CD8-positive, alpha-beta memory T cell (primary cell): ENCODE measurements at regions of chr16 and their contacts with region 1.

Region 1: GRCh38 chr16:29700253-29700987 is 21.4 kb downstream of the QPRT start:
- DNase-seq: peak; percentile 67 to 84 (median 72)
- H3K4me3 ChIP-seq: no peak overlapping the region
- H3K4me3 Mint-ChIP-seq: peak overlapping the region; percentile 75 to 92 (median 80)
- H3K27ac ChIP-seq: peak overlapping the region; percentile 41
- H3K27ac Mint-ChIP-seq: peak overlapping the region; percentile 91 to 99 (median 96)
- H3K4me1 ChIP-seq: peaks cover 34% of the 10 kb centered on the region
- H3K4me1 Mint-ChIP-seq: peaks cover 33 to 42% (median 40%) of the 10 kb centered on the region in 3 donors
- H3K27me3 ChIP-seq: no peaks in the 10 kb centered on the region
- H3K27me3 Mint-ChIP-seq: no peaks in the 10 kb centered on the region

Region 2: GRCh38 chr16:29720699-29721098 is 20.3 kb after region 1 on chr16:
- CTCF ChIA-PET with region 1: interaction called, 30 read pairs
- POLR2A ChIA-PET with region 1: interaction called, 4 read pairs
- DNase-seq: no peak
- H3K4me3 ChIP-seq: no peak overlapping the region
- H3K4me3 Mint-ChIP-seq: peak overlapping the region in 2 of 7 donors; percentile 8 to 13
- H3K27ac ChIP-seq: no peak overlapping the region
- H3K27ac Mint-ChIP-seq: no peak overlapping the region
- H3K4me1 ChIP-seq: no peaks in the 10 kb centered on the region
- H3K4me1 Mint-ChIP-seq: peaks cover 8 to 14% (median 13%) of the 10 kb centered on the region in 3 donors
- H3K27me3 ChIP-seq: no peaks in the 10 kb centered on the region
- H3K27me3 Mint-ChIP-seq: peaks cover 0 to 1% of the 10 kb centered on the region in 2 donors

Region 3: DNA sequence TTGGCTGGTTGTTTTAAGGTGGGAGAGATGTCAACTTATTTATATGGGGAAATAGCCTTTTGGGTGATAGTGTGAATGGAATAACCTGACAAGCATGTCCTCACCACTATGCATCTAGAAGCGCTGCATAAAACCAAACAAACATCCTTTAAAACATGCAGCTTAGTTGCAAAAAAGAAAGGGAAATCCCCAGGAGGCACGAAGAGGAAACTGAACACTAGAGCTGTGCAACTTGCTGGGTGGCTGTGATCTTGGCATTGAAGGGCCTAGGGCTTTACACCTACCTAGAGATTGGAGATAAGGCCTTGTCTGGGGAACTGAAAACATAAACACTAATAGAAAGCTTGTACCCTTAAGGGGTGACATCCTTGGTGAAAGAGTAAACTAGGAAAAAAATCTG is 38.1 kb after region 1 on chr16:
- CTCF ChIA-PET with region 1: interaction called, 28 read pairs
- POLR2A ChIA-PET with region 1: interaction called, 7 read pairs
- DNase-seq: peak; percentile 35 to 80 (median 79)
- H3K4me3 ChIP-seq: no peak overlapping the region
- H3K4me3 Mint-ChIP-seq: peak overlapping the region; percentile 24 to 78 (median 67)
- H3K27ac ChIP-seq: peak overlapping the region; percentile 21
- H3K27ac Mint-ChIP-seq: peak overlapping the region; percentile 89 to 98 (median 96)
- H3K4me1 ChIP-seq: peaks cover 78% of the 10 kb centered on the region
- H3K4me1 Mint-ChIP-seq: peaks cover 78 to 85% (median 82%) of the 10 kb centered on the region in 3 donors
- H3K27me3 ChIP-seq: no peaks in the 10 kb centered on the region
- H3K27me3 Mint-ChIP-seq: no peaks in the 10 kb centered on the region

Region 4: DNA sequence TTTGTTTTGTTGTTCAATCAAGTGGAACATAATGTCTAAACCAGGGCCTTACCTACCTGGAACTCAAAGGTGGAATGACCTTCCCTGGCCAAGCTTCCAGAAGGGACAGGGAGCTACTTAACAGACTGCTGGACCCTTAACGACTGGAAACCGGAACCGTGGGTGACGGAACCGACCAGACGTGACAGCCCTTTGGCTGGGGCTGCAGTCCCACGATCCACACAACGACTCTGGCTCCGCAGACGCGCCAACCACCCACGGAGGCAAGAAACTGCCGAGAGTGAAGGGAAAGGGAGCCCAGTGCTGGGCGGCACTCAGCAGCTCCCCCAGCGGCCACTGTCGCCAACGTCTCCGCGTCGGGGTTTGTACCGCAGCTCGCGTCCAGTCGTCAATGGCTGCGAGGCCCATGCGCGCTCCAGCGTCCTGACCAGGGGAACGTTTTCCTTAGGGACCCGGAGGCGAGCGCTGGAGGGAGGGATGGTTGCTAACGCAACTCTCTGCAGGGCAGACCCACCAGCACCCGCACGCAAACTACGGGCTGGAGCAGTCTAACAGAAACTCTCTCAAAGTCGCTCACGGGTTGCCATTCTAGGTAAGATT is 84.6 kb after region 1 on chr16:
- CTCF ChIA-PET with region 1: interaction called, 53 read pairs
- POLR2A ChIA-PET with region 1: interaction called, 22 read pairs
- DNase-seq: peak; percentile 55 to 79 (median 62)
- H3K4me3 ChIP-seq: peak overlapping the region; percentile 33
- H3K4me3 Mint-ChIP-seq: peak overlapping the region; percentile 50 to 77 (median 69)
- H3K27ac ChIP-seq: no peak overlapping the region
- H3K27ac Mint-ChIP-seq: peak overlapping the region in 7 of 8 donors; percentile 47 to 83 (median 74)
- H3K4me1 ChIP-seq: peaks cover 20% of the 10 kb centered on the region
- H3K4me1 Mint-ChIP-seq: peaks cover 17 to 28% (median 27%) of the 10 kb centered on the region in 3 donors
- H3K27me3 ChIP-seq: no peaks in the 10 kb centered on the region
- H3K27me3 Mint-ChIP-seq: peaks cover 0 to 3% of the 10 kb centered on the region in 2 donors

Region 5: DNA sequence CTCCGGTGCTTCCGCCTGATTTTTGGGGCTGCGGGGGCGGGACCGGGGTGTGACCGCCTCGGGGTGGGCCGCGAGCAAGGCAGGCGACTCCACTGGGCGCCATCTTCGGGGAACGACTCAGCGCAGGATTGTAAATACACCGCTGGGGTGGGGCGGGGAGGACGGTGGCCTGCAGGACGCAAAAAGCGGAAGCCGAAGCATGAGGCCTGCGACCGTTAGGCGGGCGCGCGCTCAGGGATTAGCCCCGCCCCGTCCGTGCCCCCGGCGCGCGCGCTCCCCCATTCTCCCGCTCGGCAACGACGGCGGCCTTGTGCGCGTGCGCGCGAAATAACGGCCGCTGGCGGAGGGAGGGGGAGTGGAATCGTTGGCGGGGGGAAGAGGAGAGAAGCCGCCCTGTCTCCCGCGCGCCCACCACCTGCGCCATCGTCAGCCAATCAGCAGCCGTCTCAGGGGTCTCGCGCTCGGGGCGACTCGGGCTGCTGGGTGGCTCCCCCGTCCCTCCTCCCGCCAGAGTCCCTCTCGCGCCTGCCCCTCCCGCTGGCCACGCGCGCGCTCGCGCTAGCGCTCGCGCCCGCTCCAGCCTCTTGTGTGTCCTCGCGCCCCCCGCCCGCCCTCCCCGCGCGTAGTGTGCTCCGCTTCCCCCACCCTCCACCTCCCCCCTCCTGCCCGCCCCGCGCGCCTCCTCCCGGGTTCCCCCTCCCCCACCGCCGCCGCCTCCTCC is 105.1 kb after region 1 on chr16:
- CTCF ChIA-PET with region 1: interaction called, 49 read pairs
- POLR2A ChIA-PET with region 1: interaction called, 53 read pairs
- DNase-seq: peak; percentile 97 to 99 (median 97)
- H3K4me3 ChIP-seq: peak overlapping the region; percentile 87
- H3K4me3 Mint-ChIP-seq: peak overlapping the region; percentile 93 to 100 (median 98)
- H3K27ac ChIP-seq: peak overlapping the region; percentile 95
- H3K27ac Mint-ChIP-seq: peak overlapping the region; percentile 94 to 100 (median 99)
- H3K4me1 ChIP-seq: peaks cover 36% of the 10 kb centered on the region
- H3K4me1 Mint-ChIP-seq: peaks cover 41 to 47% (median 47%) of the 10 kb centered on the region in 3 donors
- H3K27me3 ChIP-seq: no peaks in the 10 kb centered on the region
- H3K27me3 Mint-ChIP-seq: peaks cover 0 to 4% of the 10 kb centered on the region in 2 donors

Region 6: DNA sequence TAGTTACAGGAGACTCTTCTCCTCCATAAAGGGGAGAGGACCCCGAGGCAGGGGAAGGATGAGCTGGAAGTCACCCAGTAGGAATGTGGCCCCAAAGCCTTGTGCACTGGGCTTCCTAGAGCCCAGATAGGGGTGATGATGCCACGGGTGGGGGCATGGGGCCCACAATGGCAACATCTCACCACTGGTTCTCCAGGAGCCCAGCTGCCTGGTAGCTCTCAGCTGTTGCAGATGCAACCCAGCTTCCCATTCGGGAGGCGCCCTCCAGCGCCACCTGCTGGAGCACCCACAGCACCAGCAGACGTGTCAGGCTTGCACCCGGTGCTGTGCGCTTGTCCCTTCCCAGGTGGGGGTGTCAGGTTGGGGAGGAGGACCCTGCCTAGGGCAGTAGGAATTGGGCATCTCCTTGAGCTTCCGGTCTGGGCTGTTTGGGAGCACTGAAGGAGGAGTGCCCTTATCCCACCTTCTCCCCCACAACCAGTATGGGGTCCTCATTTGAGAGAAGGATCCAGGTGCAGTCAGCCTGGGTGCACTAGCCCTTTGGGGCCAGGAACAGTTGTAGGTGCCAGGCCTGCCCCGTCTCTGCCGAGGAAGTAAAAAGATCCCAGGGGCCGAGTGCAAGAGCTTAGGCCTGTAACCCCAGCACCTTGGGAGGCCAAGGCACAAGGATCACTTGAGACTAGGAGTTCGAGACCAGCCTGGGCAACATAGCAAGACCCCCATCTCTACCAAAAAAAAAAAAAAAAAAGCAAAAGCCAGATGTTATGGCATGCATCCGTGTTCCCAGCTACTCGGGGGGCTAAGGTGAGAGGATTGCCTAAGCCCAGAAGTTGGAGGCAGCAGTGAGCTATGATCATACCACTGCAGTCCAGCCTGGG is 148.2 kb after region 1 on chr16:
- CTCF ChIA-PET with region 1: interaction called, 83 read pairs
- POLR2A ChIA-PET with region 1: interaction called, 6 read pairs
- DNase-seq: peak; percentile 66 to 84 (median 74)
- H3K4me3 ChIP-seq: no peak overlapping the region
- H3K4me3 Mint-ChIP-seq: no peak overlapping the region
- H3K27ac ChIP-seq: no peak overlapping the region
- H3K27ac Mint-ChIP-seq: peak overlapping the region; percentile 45 to 68 (median 56)
- H3K4me1 ChIP-seq: no peaks in the 10 kb centered on the region
- H3K4me1 Mint-ChIP-seq: peaks cover 3 to 8% (median 5%) of the 10 kb centered on the region in 3 donors
- H3K27me3 ChIP-seq: no peaks in the 10 kb centered on the region
- H3K27me3 Mint-ChIP-seq: no peaks in the 10 kb centered on the region